ENCODE measurements at regions of chr11 and their contacts with region 1.

Region 1: DNA sequence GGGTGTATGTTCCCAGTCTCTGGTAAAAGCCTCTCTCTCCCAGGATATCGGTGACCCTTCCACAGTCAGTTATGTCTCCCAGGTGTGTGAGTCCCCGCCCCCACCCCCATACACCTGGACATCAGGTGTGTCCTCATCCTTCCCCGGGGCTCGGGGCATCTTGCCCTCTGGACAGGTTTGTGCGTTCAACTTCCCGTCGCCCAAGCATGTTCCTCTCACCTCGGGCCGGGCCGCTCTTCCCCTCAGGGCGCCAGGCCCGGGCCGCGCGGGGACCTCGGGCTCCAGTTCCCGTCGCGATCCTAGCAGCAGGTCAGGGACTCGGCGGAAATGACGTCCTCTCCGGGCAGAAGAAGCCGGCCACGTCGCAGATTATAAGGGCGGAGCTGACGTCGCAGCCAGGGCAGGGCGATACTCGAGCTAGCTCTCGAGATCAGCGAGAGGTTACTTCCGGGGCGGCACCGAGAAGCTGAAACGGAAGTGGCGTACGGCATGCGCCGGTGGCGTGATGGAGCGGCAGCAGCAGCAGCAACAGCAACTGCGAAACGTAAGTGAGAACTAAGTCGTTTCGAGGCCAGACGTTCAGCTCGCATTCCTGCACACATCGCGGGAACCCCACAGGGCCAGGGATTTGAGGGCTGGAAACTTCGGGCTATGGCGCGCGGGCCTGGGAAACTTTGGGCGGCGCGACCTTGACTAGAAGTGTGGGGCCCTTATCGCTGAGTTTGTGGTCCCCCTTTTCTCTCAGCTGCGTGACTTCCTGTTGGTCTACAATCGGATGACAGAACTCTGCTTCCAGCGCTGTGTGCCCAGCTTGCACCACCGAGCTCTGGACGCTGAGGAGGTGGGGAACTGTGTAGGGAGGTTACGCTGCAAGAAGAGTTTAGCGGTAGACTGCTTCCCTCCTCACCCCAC is at the starts of genes ARFIP2 and TIMM10B:
- DNase-seq: peak; percentile 96
- H3K4me3 Mint-ChIP-seq: peak within 1 kb of the TSS; percentile 93
- H3K27ac Mint-ChIP-seq: peak within 1 kb of the TSS; percentile 99
- H3K4me1 Mint-ChIP-seq: peaks cover 17% of the 10 kb centered on the region
- H3K27me3 Mint-ChIP-seq: no peaks in the 10 kb centered on the region
- CTCF ChIP-seq: no peak
- total RNA-seq, gene ARFIP2: 76.3 and 96.0 TPM in 2 replicates
- total RNA-seq, gene TIMM10B: 36.2 and 42.1 TPM in 2 replicates

Region 2: DNA sequence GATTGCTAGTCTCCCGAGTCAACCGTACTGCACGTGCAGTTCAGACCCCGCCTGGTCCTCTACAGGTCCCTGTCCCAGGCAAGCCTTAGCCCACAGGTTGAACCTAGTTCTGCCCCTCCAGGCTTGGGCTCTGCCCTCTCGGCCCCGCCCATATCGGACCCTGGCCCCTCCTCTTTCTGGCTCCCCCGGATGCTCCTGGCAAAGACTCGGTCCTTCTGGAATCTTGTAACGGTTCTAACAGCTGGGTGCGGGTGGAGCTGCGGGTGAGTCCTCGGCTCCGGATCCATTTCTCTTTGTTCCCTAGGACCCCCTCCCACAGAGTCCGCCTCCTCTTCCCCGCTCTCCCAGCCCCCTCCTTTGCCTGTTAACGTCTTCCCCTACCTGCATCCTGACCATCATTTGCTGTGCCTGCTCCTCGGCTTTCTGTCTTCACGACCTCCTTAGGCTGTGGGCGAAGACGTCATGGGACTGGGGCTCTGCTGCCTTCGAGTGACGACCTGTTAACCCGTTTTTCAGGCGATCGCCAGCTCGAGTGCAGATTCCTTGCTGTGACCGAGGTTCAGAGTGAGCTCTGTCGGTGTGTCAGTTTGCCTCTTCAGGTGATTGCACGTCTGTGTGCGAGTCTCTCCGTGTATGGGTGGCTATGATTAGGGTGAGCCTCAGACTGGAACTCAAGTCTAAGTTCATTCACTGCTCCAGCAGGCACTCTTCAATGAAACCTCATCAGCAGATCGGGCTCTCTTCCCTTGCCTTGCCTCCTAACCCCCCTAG is 16.0 kb after region 1 on chr11 and contains the start of gene DNHD1:
- CTCF ChIA-PET with region 1: interaction called, 6 read pairs
- POLR2A ChIA-PET with region 1: interaction called, 13 read pairs
- intact Hi-C with region 1: no loop called
- DNase-seq: no peak
- H3K4me3 Mint-ChIP-seq: no peak within 1 kb of the TSS
- H3K27ac Mint-ChIP-seq: no peak within 1 kb of the TSS
- H3K4me1 Mint-ChIP-seq: no peaks in the 10 kb centered on the region
- H3K27me3 Mint-ChIP-seq: no peaks in the 10 kb centered on the region
- CTCF ChIP-seq: no peak
- total RNA-seq, gene DNHD1: 18.3 and 26.5 TPM in 2 replicates

Region 3: DNA sequence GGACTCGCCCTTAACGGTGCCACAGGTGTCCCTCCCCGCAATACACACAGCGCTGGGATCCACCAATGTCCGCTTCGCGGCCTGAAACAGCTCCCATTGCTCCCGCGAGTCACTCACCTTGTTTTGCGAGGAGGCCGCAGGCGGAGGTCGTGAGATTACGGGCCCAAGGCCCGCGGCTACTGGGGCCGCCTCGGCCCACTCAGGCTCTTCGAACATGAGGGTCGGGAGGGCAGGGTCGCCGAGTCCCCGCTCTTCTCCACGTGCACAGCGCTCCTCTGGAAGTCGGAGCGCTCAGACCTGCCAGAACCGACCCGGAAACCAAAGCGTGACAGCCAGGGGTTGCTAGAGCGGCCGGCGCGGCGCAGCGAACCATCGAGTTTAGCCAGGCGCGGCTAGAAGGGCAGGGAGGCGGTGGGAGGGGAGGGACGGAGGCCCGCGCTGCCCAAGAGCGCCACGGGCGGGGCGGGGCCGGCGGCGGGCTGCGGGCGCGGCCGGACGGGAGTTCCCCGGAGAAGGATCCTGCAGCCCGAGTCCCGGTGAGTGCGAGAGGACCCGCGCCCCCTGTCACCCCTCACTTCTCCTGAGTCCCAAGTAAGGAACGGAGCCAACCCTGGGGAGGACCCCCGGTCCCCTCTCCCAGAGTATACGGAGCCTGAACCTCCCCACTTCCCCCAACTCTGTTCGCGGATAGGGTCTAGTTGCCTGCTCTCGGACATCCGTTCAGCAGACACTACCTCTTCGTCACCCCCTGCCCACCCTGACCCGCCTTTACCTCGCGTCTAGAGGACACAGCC is 122.2 kb after region 1 on chr11 and contains the starts of genes ILK and RRP8:
- CTCF ChIA-PET with region 1: interaction called, 4 read pairs
- POLR2A ChIA-PET with region 1: interaction called, 10 read pairs
- intact Hi-C with region 1: loop called (anchors 10 kb)
- DNase-seq: peak; percentile 90
- H3K4me3 Mint-ChIP-seq: no peak within 1 kb of the TSS
- H3K27ac Mint-ChIP-seq: no peak within 1 kb of the TSS
- H3K4me1 Mint-ChIP-seq: peaks cover 22% of the 10 kb centered on the region
- H3K27me3 Mint-ChIP-seq: no peaks in the 10 kb centered on the region
- CTCF ChIP-seq: no peak
- total RNA-seq, gene ILK: 78.9 and 92.3 TPM in 2 replicates
- total RNA-seq, gene RRP8: 23.4 and 27.6 TPM in 2 replicates

Region 4: DNA sequence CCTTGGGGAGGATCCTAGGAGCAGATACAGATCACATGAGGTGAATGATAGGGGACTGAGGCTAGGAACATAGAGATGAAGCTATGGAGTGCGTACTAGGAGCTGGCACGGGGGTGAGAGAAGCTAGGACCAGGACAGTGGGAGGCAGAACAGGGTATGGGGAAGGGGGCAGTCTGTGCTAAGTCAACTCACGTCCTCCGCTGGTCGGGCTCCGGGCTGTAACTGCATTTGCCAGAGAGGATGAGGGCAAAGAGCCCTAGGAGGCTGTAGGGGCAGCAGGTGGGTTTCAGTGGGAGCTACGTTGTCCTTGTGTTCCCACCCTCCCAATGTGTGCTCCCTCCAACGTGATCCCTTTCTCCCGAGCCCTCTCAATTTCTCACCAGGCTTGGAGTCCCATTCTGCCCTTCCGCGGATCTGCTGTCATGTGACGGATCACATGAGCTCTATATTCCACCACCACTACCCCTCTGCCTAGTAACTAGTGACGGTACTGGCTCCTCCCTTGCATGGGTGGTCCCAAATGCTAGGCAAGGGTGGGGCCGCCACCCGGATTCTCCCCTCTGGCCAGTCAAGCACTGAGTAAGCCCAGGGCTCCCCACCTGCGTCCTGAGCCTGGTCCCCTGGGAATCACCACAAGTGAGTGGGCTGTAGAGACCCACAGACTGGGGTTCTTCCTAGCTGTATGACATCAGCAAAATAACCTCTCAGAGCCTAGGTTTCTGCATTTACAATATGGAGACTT is 137.9 kb after region 1 on chr11 and contains the start of gene TPP1:
- CTCF ChIA-PET with region 1: interaction called, 4 read pairs
- POLR2A ChIA-PET with region 1: interaction called, 15 read pairs
- intact Hi-C with region 1: no loop called
- DNase-seq: peak; percentile 96
- H3K4me3 Mint-ChIP-seq: no peak within 1 kb of the TSS
- H3K27ac Mint-ChIP-seq: no peak within 1 kb of the TSS
- H3K4me1 Mint-ChIP-seq: no peaks in the 10 kb centered on the region
- H3K27me3 Mint-ChIP-seq: no peaks in the 10 kb centered on the region
- CTCF ChIP-seq: no peak
- total RNA-seq, gene TPP1: 26.9 and 46.5 TPM in 2 replicates

Measured in MCF 10A (cell line).